ENCODE measurements at regions of chr9 and their contacts with region 1.

Region 1: GRCh38 chr9:385818-386398 is 171.2 kb downstream of the DOCK8 start:
- DNase-seq: peak; percentile 53
- H3K4me3 ChIP-seq: no peak overlapping the region
- H3K27ac ChIP-seq: no peak overlapping the region
- H3K4me1 ChIP-seq: no peaks in the 10 kb centered on the region
- H3K27me3 ChIP-seq: no peaks in the 10 kb centered on the region
- CTCF ChIP-seq: peak; percentile 96 to 99

Region 2: DNA sequence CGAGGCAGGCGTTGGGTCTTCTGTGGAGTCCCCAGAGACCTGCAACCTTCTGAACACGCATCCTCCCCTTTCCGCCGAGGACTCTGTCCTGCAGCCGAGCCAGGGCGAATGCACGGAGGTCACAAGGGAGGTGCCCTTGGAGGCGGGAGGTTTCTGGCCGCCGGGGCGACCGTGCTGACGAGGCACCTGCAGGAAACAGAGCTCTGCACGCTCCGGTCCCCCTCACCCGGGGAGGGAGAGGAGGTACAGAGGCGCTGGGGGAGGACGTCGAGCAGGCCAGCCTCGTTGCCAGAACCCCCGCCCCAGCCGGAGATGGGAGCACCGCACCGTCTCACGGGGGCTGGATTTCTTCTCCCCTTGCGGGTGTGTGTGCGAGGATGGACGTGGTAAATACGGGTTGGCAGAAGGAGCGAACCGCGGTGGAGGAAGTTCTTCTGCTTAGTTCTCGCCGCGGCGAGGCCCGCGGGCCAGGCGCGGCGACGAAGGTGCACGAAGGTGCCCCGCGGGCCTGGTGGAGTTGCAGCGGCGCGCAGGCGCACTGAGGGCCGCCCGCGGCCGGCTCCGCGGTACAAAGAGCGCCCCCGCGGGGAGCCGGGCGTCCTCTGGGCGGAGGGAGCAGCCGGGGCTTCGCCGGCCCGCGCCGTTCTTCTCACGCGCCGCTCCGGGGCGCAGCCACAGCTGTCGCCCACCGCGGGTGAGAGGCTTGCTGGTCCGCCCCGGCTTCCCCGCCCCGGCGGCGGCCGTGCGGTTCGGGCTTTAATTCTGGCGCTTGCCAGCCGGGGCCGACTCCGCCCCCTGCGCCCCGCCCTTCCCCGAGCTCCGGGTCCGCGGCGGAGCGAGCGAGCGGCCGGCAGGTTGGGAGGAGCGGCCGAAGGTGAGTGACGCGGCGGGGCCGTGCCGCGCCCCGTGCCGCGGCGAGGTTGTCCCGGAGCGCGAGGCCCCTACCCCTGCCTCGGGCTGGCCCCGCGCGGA is 118.3 kb after region 1 on chr9:
- CTCF ChIA-PET with region 1: interaction called, 4 read pairs
- dilution Hi-C with region 1: no loop called
- in situ Hi-C with region 1: no loop called
- intact Hi-C with region 1: loop called (anchors 2 kb)
- DNase-seq: peak; percentile 81
- H3K4me3 ChIP-seq: peak within 1 kb of the TSS; percentile 63 to 87 (median 83)
- H3K27ac ChIP-seq: peak within 1 kb of the TSS; percentile 52
- H3K4me1 ChIP-seq: peaks cover 14% of the 10 kb centered on the region
- H3K27me3 ChIP-seq: no peaks in the 10 kb centered on the region
- CTCF ChIP-seq: peak in 1 of 2 donors; percentile 36

Region 3: DNA sequence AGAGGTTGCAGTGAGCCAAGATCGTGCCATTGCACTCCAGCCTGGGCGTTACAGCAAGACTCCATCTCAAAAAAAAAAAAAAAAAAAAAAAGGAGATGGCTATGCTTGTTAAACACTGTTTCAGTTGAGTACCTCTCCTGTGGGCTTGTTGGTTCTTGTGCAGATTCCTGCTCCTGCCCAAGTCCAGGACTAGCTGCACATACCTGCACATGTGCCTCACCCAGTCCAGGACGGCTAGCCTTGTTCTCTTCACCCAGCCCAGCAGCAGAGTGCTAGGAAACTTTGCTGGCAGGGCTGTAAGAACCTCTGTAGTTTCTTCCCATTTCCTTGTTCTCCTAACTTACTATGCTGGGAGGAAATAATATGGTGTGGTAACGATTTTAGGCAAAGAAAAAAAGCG is 221.5 kb after region 1 on chr9:
- CTCF ChIA-PET with region 1: no interaction called
- dilution Hi-C with region 1: no loop called
- in situ Hi-C with region 1: loop called in 1 of 2 experiments (anchors 10 kb)
- intact Hi-C with region 1: no loop called
- DNase-seq: peak; percentile 90
- H3K4me3 ChIP-seq: no peak overlapping the region
- H3K27ac ChIP-seq: peak overlapping the region; percentile 86
- H3K4me1 ChIP-seq: peaks cover 19% of the 10 kb centered on the region
- H3K27me3 ChIP-seq: no peaks in the 10 kb centered on the region
- CTCF ChIP-seq: no peak

Region 4: DNA sequence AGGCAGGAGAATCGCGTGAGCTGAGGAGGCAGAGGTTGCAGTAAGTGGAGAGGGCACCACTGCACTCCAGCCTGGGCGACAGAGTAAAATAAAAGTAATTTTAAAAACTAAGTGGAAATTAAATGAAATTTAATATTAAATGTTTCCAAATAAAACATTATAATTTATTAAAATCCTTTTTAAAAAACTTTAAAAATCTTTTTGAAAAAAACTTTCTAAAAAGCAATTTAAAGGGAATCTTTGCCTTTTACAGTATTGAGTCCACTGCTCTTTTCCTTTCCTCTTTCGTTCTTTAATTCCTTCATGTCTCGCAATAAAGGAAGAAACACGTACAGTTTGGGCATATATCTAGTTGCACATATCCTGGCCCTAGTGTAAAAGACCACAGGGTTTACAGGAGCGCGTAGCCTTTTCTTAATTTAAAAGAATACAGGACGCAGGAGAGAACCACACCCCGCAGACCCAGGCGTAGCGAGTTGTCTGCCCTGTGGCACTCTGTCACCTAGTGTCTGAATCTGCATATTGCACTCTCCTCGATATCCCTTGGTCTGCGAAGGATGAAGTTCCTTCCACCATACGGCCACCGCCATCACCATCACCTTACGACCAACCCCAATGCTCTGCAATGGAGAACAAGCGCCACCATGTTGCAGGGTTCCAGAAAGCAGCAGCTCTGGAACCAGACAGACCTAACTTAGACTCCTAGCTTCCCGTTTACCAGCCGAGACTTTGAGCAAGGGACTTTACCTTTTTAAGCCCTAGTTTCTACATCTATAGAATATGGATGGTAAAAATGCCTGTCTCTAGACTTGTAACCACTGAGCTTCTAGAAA is 378.0 kb after region 1 on chr9:
- CTCF ChIA-PET with region 1: no interaction called
- dilution Hi-C with region 1: no loop called
- in situ Hi-C with region 1: loop called in 1 of 2 experiments (anchors 10 kb)
- intact Hi-C with region 1: loop called (anchors 1 kb)
- DNase-seq: peak; percentile 74
- H3K4me3 ChIP-seq: peak overlapping the region in 1 of 3 experiments; percentile 26
- H3K27ac ChIP-seq: no peak overlapping the region
- H3K4me1 ChIP-seq: peaks cover 7% of the 10 kb centered on the region
- H3K27me3 ChIP-seq: peaks cover 2% of the 10 kb centered on the region
- CTCF ChIP-seq: peak; percentile 98 to 99